Cardiac septum (tissue), 1 donor: ENCODE measurements at regions of chr13 and their contacts with region 1.

Region 1: GRCh38 chr13:110301606-110302553 is 5.1 kb downstream of the COL4A1 start:
- DNase-seq: no peak

Region 2: GRCh38 chr13:109816112-109816818 is 485.6 kb before region 1 on chr13:
- intact Hi-C with region 1: no loop called
- DNase-seq: no peak

Region 3: DNA sequence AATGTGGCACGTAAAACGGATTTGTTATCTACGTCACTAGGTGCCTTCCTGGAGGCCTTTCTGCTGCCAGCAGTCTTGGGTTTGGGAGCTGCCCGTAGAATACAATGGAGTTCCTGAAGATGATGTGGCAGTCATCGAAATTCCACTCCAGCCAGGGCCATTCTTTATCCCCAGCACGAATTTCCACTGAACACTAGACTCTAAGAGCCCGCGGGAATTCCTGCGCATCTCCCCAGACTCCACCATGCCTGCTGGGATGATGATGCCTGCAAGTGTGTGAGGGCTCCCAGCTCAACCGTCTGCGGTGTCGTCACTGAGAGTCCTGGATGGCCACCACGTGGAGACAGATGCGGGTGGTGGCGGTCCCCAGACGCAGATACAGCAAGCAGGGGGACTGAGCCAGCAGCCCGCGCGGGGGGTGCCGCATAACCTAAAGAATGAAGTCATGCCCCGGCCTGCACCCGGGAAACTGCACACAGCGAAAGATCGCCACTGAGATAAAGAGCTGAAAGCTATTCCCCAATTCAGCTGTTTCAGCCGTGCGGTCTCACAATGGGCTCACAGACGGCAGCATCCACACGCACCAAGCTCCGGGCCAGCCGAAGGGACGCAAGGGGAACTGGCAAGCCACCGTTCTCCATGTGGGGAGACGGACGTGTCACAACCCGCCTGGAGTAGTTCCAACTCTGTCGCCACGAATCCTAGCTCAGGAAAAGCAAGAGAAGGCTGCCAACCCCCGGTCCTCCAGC is 36.0 kb before region 1 on chr13:
- intact Hi-C with region 1: loop called (anchors 5 kb)
- DNase-seq: peak; percentile 76

Region 4: GRCh38 chr13:110405597-110406450 is 103.9 kb after region 1 on chr13:
- intact Hi-C with region 1: loop called (anchors 2 kb)
- DNase-seq: no peak

Region 5: DNA sequence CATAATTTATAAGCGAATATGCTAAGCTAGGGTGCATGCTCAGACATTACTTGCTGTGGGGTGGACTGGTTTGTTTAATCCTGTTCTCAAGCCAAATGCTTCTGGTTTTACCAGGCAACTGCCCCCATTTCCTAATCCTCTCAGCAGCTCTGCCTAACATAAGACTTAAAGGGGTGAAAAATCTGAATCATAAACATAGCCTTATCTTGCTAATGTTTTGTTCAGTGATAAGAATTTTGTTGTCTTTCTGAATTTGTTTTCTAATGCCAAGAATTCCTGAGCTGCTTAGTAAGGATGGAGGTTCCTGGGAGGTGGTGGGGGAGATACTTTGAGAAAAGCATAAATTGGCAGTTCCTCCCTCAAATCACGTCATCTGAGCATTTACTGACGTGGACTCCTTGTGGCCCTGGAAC is 454.3 kb after region 1 on chr13:
- intact Hi-C with region 1: no loop called
- DNase-seq: no peak